Panc1 (cell line): ENCODE measurements at regions of chr7 and their contacts with region 1.

Region 1: DNA sequence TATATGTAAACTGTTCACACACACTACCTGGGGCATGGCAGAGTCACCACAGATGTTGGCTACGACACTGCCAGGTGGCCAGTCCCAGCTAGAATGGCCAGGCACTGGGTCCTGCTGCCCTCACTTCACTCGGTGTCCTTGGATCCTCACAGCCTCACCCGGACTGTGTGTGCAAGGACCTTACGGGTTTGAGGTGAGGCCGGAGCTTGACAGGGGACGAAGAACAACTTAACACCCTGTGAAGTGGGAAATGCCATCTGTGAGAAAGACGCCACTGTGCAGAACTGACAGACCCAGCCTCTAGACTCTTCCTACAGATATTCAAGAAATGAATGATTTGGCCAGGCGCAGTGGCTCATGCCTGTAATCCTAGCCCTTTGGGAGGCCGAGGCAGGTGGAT is 46.7 kb downstream of the KLRG2 start:
- DNase-seq: no peak
- ATAC-seq: no peak
- H3K4me3 ChIP-seq: no peak overlapping the region
- H3K27ac ChIP-seq: no peak overlapping the region
- H3K4me1 ChIP-seq: no peaks in the 10 kb centered on the region
- H3K27me3 ChIP-seq: no peaks in the 10 kb centered on the region
- CTCF ChIP-seq: no peak

Region 2: GRCh38 chr7:139169801-139170200 is 267.0 kb before region 1 on chr7:
- CTCF ChIA-PET with region 1: no interaction called
- POLR2A ChIA-PET with region 1: no interaction called
- in situ Hi-C with region 1: no loop called
- intact Hi-C with region 1: no loop called
- DNase-seq: no peak
- ATAC-seq: no peak
- H3K4me3 ChIP-seq: no peak overlapping the region
- H3K27ac ChIP-seq: no peak overlapping the region
- H3K4me1 ChIP-seq: no peaks in the 10 kb centered on the region
- H3K27me3 ChIP-seq: no peaks in the 10 kb centered on the region
- CTCF ChIP-seq: no peak

Region 3: DNA sequence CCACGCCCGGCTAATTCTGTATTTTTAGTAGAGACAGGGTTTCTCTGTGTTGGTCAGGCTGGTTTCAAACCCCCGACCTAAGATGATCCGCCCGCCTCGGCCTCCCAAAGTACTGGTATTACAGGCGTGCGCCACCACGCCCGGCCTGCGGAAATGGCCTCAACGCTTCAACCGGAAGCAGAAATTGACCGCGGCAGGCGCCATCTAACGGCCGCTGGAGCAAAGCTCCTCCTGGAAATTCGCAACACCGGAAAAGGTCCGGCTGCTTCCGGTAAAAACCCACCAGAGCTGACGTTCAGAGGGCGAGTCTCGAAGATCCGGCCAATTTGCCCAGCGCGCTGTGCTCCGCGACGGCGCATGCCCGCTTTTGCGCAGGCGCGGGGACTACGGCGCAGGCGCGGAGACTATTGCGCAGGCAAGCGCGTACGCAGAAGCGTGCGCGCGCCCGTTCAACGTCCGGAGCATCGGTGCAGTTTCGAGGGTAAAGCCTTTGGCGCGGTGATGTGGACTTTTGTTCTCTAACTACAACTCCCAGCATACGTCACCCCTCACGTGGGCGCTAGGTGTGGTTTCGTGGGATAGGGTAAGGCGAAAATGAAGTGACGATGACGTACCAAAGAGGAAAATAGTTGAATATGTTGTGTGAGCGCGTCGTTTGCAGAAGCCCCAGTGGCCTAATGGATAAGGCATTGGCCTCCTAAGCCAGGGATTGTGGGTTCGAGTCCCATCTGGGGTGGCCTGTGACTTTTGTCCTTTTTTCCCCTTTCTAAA is 96.6 kb before region 1 on chr7:
- CTCF ChIA-PET with region 1: no interaction called
- POLR2A ChIA-PET with region 1: no interaction called
- in situ Hi-C with region 1: no loop called
- intact Hi-C with region 1: no loop called
- DNase-seq: peak; percentile 100
- ATAC-seq: peak; percentile 90
- H3K4me3 ChIP-seq: peak overlapping the region; percentile 69 to 90
- H3K27ac ChIP-seq: peak overlapping the region; percentile 98
- H3K4me1 ChIP-seq: peaks cover 8% of the 10 kb centered on the region
- H3K27me3 ChIP-seq: no peaks in the 10 kb centered on the region
- CTCF ChIP-seq: peak; percentile 91

Region 4: DNA sequence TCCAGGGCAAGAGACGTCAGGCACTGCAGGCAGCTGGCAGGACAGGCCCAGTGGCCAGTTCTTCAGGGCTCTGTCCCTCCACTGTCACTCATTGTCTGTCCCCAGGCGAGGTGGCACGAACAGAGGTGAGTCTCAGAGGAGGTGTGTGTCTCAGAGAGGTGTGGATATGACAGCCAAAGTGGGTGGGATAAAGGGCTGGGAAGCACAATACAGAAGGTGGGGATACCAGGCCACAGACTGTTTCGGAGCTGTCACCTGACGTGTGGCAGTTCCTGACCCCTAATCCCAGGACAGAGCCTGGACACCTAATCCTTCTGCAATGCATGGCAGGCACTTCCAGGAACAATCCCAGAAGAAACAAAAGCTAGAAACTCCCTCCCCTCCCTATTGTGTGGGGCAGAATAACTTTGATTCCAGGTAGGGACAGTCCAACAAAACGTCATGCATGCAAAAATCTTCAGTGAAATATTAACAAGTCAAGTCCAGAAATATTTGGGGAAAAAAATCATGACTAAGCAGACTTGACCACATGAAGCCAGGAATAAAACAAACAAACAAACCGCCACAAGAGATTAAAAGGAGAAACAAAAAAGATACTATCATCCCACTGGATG is 35.0 kb after region 1 on chr7:
- CTCF ChIA-PET with region 1: interaction called, 12 read pairs
- POLR2A ChIA-PET with region 1: no interaction called
- in situ Hi-C with region 1: no loop called
- intact Hi-C with region 1: no loop called
- DNase-seq: no peak
- ATAC-seq: peak; percentile 71
- H3K4me3 ChIP-seq: no peak overlapping the region
- H3K27ac ChIP-seq: no peak overlapping the region
- H3K4me1 ChIP-seq: no peaks in the 10 kb centered on the region
- H3K27me3 ChIP-seq: no peaks in the 10 kb centered on the region
- CTCF ChIP-seq: no peak